Dorsolateral prefrontal cortex (tissue), 120 donors: ENCODE measurements at regions of chr14 and their contacts with region 1.

Region 1: DNA sequence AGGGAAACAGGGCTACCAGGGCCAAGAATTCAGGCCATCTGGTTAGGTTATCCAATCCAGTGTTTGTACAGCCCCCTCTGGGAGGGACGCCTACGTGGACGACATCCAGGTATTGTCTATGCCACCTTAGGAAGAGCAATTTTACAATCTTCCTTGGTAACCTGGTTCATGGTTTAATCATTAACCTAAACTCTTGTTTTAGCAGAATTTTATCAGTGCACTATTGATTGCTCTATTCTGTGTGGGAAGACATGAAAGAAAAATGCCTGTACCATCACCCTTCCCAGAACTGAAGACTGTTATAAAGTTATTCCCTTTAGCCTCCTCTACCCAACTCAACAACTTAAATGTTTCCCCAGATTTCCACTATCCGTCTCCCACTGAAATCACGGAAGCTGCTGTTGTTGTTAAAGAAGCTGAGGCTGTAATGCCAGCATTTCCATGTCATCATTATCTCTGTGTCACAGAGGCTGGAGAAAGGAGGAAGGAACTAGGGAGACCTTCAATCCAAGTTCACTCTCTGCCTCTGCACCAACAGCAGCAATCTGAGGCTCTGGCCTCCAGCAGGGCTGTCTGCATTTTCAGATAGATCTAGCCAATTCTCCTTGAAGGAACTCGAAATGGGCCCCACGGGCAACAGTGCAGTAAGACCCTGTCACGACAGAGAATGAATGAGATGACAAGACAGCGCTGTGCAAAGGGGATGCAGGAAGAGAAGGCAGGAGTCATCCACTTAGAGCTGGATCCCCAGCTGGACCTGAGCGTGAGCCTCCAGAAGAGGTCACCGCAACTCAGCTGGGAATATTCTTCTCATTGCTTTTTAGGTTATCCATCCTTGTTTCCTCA is 183.4 kb upstream of the GZMB start:
- DNase-seq: peak in 1 of 10 donors; percentile 45
- H3K4me3 ChIP-seq: no peak overlapping the region
- H3K27ac ChIP-seq: peak overlapping the region in 35 of 59 donors; percentile 1 to 67 (median 38)
- H3K27me3 ChIP-seq: no peaks in the 10 kb centered on the region
- CTCF ChIP-seq: peak in 53 of 56 donors; percentile 6 to 71 (median 45)

Region 2: DNA sequence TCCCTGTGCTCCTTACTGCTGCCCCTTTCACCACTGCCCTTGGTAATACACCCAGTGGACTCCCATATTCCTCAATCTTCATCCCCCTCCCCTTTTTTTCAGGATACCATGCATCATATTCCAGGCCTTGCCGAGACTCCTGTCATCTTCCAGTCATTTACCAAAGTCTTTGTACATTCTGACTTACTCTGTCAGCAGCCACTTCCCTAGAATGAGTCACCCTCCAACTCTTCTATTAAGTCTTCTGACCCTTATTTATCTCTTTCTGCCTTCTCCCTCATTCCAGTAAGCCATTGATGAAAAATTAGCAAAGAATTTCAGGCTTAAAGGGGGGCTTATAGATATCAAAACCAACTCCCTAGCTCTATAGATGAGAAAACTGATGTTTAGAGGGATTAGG is 104.5 kb after region 1 on chr14:
- intact Hi-C with region 1: no loop called
- DNase-seq: no peak
- H3K4me3 ChIP-seq: no peak overlapping the region
- H3K27ac ChIP-seq: peak overlapping the region in 1 of 59 donors; percentile 18
- H3K27me3 ChIP-seq: no peaks in the 10 kb centered on the region
- CTCF ChIP-seq: no peak

Region 3: DNA sequence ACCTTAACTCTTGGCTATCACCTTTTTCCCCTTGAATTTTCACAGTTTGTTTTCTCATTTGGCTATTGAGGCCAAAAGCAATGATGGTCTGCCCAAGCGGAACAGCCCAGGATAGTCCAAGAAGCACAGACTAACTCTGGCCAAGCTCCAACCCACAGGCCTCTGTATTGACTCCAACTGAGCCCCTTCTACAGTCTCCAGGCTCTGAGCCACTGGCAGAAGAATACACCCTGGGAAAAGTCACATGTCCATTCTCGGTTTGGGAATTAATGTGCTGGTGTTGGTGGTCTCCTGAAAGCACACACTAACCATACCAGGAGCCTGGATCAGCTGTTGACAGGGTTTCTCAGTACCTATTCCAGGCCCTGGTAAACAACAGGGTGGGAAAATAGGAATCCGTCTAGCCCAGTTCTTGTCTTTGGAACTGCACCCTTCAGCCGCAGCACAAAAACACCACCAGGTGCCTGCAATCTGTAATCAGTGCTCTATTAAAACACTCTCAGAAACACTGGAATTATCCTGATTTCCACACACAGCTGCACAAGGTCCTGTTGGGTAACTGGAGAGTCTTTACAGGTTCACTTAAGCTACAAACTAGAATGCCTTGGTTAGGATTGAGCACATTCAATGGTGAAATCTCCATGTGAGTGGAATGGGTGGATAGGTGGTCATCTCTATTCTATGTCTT is 168.9 kb after region 1 on chr14:
- intact Hi-C with region 1: no loop called
- DNase-seq: peak in 1 of 10 donors; percentile 44
- H3K4me3 ChIP-seq: no peak overlapping the region
- H3K27ac ChIP-seq: peak overlapping the region in 46 of 59 donors; percentile 1 to 75 (median 43)
- H3K27me3 ChIP-seq: no peaks in the 10 kb centered on the region
- CTCF ChIP-seq: no peak

Region 4: DNA sequence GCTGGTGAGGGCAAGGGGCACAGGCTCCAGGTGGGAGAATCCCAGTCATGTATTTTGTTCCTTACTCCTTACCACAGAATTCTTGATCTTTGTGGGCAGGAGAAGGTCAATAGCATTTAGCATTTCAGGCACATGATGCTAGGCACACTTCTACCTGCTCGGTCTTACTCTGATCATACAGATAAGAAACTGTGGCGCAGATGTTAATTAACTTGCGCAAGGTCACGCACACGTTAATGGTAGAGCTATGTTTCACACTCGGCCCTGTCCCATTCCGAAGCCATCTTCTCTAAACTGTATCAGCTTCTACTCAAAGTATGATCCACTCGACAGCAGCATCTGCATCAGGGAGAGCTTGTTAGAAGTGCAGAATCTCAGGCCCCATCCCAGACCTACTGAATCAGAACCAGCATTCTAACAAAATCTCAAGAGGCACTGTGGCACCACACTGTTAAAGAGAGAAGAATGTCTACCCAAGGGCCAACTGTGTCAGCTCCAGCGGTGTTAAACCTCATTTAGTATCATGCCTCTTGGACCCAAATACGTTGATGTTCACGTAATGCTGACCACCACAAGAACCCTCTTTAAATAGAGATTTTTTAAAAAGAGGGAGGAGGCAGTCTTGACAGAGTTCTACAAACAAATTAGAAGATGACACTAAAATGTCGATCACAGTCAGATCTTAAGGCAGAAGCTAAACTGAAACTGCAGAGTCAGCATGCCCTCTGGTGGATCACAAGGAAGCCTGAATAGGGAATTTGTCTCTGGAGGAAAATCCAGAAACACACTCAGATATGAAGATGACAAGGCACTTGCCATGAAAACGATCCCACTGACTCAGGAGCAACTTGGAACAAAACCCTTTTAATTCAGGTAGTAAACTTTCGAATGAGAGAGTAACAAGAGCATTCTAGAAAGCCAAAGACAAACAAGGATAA is 225.2 kb after region 1 on chr14:
- intact Hi-C with region 1: loop called (anchors 5 kb)
- DNase-seq: peak in 3 of 10 donors; percentile 34 to 51 (median 40)
- H3K4me3 ChIP-seq: peak overlapping the region in 34 of 59 donors; percentile 2 to 46 (median 26)
- H3K27ac ChIP-seq: peak overlapping the region in 23 of 59 donors; percentile 2 to 65 (median 21)
- H3K27me3 ChIP-seq: no peaks in the 10 kb centered on the region
- CTCF ChIP-seq: peak in 55 of 56 donors; percentile 51 to 87 (median 72)